Heart left ventricle (tissue), 16 donors: ENCODE measurements at regions of chr19 and their contacts with region 1.

Region 1: DNA sequence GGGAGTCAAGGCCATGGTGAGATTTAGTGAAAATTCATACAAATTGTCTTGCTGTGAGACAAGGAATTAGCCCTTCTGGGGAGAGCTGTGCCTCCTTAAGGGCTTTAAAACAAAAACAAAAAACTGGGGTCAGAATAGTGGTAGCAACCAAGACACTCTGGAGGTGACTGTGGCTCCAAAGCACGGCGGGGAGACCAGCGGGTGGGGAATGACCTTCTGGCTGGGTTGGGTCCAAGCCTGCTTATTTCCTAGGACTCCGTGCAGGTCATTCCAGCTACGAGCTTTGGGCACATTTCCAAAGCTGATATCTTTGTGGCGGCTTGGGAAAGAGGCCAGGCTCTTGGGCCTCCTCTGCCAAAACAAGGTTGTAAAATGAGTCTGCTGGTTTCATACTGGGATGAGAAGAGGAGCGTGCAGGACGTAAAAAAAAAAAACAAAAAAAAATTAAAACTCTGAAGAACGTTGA is 348.3 kb downstream of the UQCRFS1 start:
- DNase-seq: peak; percentile 67 to 86 (median 74)
- ATAC-seq: peak; percentile 76 to 90 (median 86)
- H3K4me3 ChIP-seq: no peak overlapping the region
- H3K27ac ChIP-seq: peak overlapping the region in 10 of 12 donors; percentile 46 to 74 (median 62)
- H3K4me1 ChIP-seq: peaks cover 0 to 17% (median 6%) of the 10 kb centered on the region in 12 donors
- H3K27me3 ChIP-seq: peaks cover 0 to 4% (median 0%) of the 10 kb centered on the region in 9 donors
- CTCF ChIP-seq: no peak
- POLR2A ChIP-seq: no peak

Region 2: GRCh38 chr19:28793391-28794168 is 71.0 kb before region 1 on chr19:
- intact Hi-C with region 1: loop called in 1 of 10 experiments (anchors 5 kb)
- DNase-seq: peak in 3 of 5 donors; percentile 18 to 34 (median 26)
- ATAC-seq: peak in 3 of 4 donors; percentile 73 to 92 (median 73)
- H3K4me3 ChIP-seq: peak overlapping the region; percentile 26 to 79 (median 54)
- H3K27ac ChIP-seq: peak overlapping the region in 5 of 12 donors; percentile 17 to 69 (median 53)
- H3K4me1 ChIP-seq: peaks cover 0 to 10% (median 0%) of the 10 kb centered on the region in 12 donors
- H3K27me3 ChIP-seq: peaks cover 0 to 29% (median 6%) of the 10 kb centered on the region in 9 donors
- CTCF ChIP-seq: no peak
- POLR2A ChIP-seq: no peak

Region 3: DNA sequence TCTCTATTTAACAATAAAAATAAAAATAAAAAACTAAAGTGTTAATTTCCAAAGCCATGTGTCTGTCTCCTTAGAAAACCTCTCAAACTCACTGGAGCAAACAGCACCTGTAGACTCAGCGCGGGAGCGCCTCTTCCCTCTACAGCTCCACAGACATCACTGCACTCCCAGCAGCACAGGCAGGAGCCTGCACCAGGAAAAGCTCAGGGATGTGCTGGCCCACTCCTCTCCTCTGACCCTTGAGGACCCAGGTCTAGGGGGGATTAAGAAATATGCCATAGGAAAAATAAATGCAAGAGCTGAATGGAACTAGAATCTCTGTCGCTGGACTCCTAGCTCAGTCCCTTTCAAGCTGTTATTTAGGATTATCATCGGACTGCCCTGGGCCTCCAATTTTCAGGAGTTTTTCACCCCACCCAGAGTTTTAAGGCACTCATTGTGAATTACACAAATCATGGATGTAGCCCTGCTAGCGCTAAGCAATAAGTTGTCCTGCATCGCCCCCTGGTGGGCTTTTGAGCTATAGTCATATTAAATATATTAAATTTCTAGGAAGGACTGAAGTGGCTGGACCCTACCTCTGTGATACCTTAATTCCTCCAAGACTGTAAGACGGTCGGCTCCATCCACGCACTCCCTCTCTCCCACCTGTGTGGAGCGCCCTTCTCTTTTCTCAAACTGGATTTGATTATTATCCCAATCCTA is 14.4 kb after region 1 on chr19:
- intact Hi-C with region 1: loop called in 1 of 10 experiments (anchors 1 kb)
- DNase-seq: peak; percentile 42 to 75 (median 67)
- ATAC-seq: peak in 3 of 4 donors; percentile 23 to 40 (median 23)
- H3K4me3 ChIP-seq: no peak overlapping the region
- H3K27ac ChIP-seq: no peak overlapping the region
- H3K4me1 ChIP-seq: peaks cover 0 to 15% (median 5%) of the 10 kb centered on the region in 12 donors
- H3K27me3 ChIP-seq: no peaks in the 10 kb centered on the region
- CTCF ChIP-seq: peak; percentile 53 to 84 (median 73)
- POLR2A ChIP-seq: no peak

Region 4: DNA sequence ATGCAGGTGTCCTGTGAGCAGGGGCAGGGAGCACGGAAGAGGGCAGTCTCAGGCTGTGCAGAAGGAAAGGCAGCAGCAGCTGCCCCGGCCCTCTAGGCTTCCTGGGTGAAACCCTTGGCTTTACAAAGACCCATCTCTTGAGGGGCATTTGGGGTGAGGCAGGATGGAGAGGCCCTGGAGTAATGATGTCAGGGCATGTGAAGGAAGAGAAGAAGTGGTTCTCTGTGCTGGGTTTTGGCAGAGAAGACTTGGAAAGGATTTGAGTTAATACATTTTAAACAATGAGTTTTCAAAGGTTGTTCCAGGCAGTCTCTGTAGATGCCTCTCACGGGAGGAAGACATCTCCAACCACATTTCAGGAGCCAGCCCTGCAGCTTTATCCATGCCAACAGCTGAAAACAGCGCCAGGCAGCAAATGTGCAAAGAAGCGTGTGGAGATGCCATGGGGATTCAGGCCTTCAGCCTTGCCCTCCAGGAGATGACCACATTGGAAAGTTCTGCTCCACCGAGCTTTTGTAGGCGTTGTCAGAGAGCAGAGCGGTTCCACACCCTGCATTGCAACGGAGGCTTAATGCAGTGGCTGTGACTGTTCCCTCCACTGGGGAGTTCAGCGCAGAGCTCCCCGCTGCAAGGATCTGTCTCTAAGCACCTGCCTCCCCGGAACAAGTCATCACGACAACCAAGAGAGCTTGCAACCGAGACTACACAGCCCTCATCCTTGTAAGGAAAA is 25.5 kb after region 1 on chr19:
- intact Hi-C with region 1: no loop called
- DNase-seq: no peak
- ATAC-seq: no peak
- H3K4me3 ChIP-seq: no peak overlapping the region
- H3K27ac ChIP-seq: no peak overlapping the region
- H3K4me1 ChIP-seq: peaks cover 0 to 10% (median 0%) of the 10 kb centered on the region in 12 donors
- H3K27me3 ChIP-seq: peaks cover 0 to 2% (median 0%) of the 10 kb centered on the region in 9 donors
- CTCF ChIP-seq: no peak
- POLR2A ChIP-seq: no peak